Posterior vena cava (tissue), 2 donors: ENCODE measurements at regions of chr4 and their contacts with region 1.

Region 1: DNA sequence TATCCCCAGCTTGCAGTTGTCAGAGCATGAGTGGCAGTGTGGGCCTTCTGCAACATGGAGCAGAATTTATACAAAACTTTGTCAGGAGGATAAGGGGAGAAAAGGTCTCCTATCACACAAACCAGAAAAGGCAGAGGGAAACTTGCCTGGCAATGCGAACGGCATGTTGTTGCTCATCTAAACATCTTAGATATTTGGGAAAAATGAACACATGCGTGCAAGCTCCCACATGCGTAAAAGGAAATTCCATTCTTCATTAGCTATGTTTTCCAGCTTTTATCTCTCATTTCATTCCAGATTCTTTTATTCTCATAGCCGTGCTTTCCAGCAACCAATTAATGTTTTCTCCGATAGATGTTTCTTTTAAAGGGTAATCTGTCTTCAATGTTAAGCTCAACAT is 31.3 kb upstream of the GBA3 start:
- DNase-seq: no peak

Region 2: DNA sequence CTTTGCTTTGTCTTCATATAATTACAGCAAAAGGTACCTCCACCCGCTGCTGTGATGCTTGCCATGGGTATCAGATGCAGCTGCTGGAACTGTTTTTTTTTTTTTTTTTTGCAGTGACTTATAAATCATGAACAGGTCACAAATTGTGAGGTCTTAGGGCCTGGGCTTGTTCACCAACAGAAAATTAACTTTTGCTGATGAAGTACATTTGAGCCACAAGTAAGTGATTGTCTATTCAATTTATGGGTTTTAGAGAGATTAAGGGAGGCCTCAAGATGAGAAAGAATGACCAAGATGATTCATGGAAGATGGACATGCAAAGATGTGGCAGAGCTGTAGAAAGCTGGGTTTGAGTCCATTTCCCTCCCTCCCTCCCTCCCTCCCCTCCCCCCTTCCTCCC is 13.3 kb after region 1 on chr4:
- intact Hi-C with region 1: loop called in 1 of 2 experiments (anchors 1 kb)
- DNase-seq: no peak

Region 3: DNA sequence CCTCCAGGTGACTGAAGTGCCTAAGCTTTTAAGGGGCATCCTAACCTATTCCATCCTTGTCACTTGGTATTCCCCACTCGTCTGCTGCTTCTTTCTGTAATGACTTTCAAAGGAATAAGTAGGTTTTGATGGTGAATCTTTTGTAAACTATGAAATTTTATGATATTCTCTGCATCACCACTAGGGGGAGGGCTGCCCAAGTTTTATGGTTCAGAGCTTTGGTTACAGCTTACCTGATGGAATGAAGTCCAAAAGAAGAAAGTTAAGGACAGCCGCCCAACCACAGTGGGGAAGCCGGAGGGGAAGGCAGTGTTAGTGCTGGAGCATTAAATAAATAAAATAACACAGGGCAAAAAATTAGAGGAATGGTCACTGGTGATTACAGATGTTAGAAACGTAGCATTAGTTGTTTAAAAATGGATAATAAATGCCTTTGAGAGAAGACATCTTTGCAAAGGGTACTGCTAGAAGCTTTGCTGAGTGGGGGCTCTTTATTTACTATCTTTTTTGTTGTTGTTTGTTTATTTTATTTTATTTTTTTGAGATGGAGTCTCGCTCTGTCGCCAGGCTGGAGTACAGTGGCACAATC is 236.2 kb after region 1 on chr4:
- intact Hi-C with region 1: no loop called
- DNase-seq: no peak